ENCODE measurements at regions of chr10 and their contacts with region 1.

Region 1: DNA sequence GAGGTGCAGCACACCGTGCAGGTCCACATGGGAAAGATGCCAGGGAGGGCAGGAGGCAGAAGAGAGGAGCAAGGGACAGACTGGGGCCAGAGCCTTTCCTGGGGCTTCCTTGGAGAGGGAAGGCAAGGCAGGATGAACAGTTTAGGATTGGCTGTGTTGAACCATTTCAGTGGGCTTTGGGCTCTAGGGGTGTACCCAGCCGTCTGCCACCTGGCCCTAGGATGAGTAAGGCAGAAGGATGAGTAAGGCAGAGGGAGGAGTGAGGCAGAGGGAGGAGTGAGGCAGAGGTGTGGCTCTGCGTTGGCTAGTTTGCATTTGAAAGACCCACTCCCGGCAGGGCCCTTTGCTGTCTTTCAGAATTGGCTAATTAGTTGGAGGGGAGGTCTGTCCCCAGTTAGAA is 31.5 kb upstream of the PRF1 start:
- DNase-seq: no peak
- ATAC-seq: no peak
- H3K4me3 ChIP-seq: no peak overlapping the region
- H3K27ac ChIP-seq: no peak overlapping the region
- H3K4me1 ChIP-seq: peaks cover 7% of the 10 kb centered on the region; the same call in 1 of the 2 replicates
- H3K27me3 ChIP-seq: no peaks in the 10 kb centered on the region
- CTCF ChIP-seq: no peak

Region 2: DNA sequence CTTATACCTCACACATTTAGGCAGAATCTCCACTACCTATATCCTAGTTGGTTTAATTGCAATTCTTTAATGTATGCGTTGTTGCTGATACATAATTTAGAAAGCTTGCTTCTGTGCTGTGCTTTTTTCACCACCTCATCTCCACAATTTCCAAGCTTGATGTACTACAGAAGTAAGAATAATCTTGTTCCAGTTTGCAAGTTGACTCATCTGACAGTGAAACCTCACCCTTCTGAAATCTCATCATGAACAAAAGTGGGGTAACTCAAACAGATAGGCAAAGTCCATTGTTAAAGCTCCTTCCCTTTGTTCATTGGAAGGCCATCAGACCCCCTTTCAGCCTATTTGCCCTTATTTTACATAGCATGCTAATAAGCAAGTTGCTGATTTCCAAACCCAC is 216.4 kb before region 1 on chr10:
- CTCF ChIA-PET with region 1: no interaction called
- POLR2A ChIA-PET with region 1: interaction called, 10 read pairs
- intact Hi-C with region 1: no loop called
- DNase-seq: no peak
- ATAC-seq: peak; percentile 29
- H3K4me3 ChIP-seq: no peak overlapping the region
- H3K27ac ChIP-seq: no peak overlapping the region
- H3K4me1 ChIP-seq: peaks cover 14% of the 10 kb centered on the region
- H3K27me3 ChIP-seq: no peaks in the 10 kb centered on the region
- CTCF ChIP-seq: no peak

Measured in PC-3 (cell line).